ENCODE measurements at regions of chr6 and their contacts with region 1.

Region 1: DNA sequence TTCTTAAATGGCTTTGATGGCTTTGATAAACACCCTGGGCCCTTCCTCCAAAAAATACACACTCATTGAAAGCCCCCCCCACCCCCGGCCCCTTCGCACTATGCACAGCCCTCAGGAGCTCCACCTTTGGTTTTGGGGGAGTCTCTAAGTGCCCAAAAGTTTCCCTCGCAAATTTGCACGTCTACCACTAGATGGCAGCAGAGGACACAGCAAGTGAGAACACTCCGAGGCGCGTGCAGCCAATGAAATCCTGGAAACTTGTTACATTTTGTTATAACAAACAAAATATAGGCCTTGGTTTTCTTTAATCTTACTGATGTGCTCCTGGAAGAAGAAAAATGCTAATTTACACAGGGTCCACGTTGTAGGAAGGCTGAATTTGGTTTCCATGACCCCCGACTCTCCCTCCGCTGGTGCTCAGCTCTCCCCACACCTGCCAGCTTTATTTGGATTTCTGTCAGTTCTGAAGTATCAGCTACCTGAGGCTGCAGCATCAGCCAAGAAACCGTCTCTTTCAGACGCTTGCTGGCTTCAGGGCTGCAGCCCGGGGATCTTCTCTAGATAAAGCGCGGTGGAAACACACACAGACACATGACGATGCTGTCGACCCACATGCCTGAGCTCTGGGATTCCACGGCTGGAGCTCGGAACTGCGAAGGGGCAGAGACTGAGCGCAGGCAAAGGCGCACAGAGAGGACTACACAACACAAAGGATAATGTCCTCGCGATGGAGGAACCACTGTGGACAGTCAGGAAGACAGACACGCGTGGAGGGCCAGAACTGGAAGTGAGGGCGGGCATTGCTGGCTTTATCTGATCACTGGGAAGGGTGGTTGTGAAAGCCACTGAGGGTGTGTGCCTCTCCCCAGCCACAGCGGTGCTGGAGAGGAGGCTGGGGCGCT is 148.4 kb upstream of the RPS6KA2 start:
- DNase-seq: peak; percentile 41 to 76 (median 68)
- ATAC-seq: peak in 1 of 2 donors; percentile 65
- H3K4me3 ChIP-seq: no peak overlapping the region
- H3K27ac ChIP-seq: no peak overlapping the region
- H3K4me1 ChIP-seq: no peaks in the 10 kb centered on the region
- H3K27me3 ChIP-seq: no peaks in the 10 kb centered on the region

Region 2: DNA sequence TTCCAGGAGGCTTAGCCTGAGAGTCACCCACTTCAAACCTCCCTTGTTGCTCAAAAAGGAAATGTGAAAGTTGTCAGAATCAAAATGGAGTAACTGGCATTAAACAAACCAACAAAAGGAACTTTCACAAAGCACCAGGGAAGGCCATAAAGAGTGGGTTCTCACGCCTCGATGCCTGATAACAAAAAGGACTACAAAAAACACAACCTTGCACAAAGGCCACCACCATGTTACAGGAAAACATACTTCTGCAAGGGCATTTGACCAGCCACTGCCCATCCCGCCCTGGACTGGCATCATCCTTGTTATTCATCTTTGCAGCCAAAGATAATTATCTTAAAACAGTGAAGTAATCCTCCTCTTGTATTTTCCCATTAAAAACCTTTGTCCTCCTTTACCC is 146.1 kb after region 1 on chr6:
- intact Hi-C with region 1: no loop called
- DNase-seq: no peak
- ATAC-seq: no peak
- H3K4me3 ChIP-seq: no peak overlapping the region
- H3K27ac ChIP-seq: no peak overlapping the region
- H3K4me1 ChIP-seq: no peaks in the 10 kb centered on the region
- H3K27me3 ChIP-seq: no peaks in the 10 kb centered on the region

Region 3: DNA sequence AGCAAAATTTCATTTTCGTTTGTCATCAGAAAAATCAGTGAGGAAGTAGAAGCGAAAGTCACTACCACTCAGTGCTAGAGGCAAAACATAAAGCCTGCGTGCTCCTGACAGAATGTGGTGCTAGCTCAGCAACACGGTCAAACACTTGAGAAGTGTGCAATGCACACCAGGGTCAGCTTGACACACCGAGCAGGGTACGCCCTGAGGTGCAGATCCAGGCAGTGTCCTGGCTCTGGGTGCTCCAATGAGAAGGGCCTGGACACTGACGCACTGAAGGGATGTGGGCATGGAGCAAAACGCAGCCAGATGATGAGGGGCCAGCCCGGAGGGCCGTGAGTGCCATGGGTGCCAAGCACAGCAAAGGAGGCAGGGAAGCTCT is 175.0 kb after region 1 on chr6:
- intact Hi-C with region 1: loop called in 3 of 4 experiments (anchors 5 to 10 kb)
- DNase-seq: peak in 1 of 3 donors; percentile 46
- ATAC-seq: peak; percentile 44 to 45
- H3K4me3 ChIP-seq: no peak overlapping the region
- H3K27ac ChIP-seq: peak overlapping the region; percentile 16
- H3K4me1 ChIP-seq: peaks cover under 1% of the 10 kb centered on the region
- H3K27me3 ChIP-seq: no peaks in the 10 kb centered on the region

Region 4: GRCh38 chr6:166956444-166957086 is 181.1 kb after region 1 on chr6 and contains the start of gene RNASET2:
- intact Hi-C with region 1: loop called in 3 of 4 experiments (anchors 5 to 10 kb)
- DNase-seq: peak; percentile 97 to 99 (median 99)
- ATAC-seq: peak; percentile 99
- H3K4me3 ChIP-seq: peak within 1 kb of the TSS; percentile 73
- H3K27ac ChIP-seq: peak within 1 kb of the TSS; percentile 42
- H3K4me1 ChIP-seq: peaks cover 2% of the 10 kb centered on the region
- H3K27me3 ChIP-seq: no peaks in the 10 kb centered on the region
- total RNA-seq, gene RNASET2: 19.4 to 27.2 (median 22.9) TPM

Region 5: GRCh38 chr6:166989427-166990032 is 214.1 kb after region 1 on chr6:
- intact Hi-C with region 1: loop called in 2 of 4 experiments (anchors 10 kb)
- DNase-seq: no peak
- ATAC-seq: no peak
- H3K4me3 ChIP-seq: no peak overlapping the region
- H3K27ac ChIP-seq: no peak overlapping the region
- H3K4me1 ChIP-seq: no peaks in the 10 kb centered on the region
- H3K27me3 ChIP-seq: no peaks in the 10 kb centered on the region

Region 6: GRCh38 chr6:167141667-167142432 is 366.4 kb after region 1 on chr6:
- intact Hi-C with region 1: loop called in 2 of 4 experiments (anchors 5 to 10 kb)
- DNase-seq: peak in 2 of 3 donors; percentile 68
- ATAC-seq: peak; percentile 76 to 77
- H3K4me3 ChIP-seq: no peak overlapping the region
- H3K27ac ChIP-seq: no peak overlapping the region
- H3K4me1 ChIP-seq: no peaks in the 10 kb centered on the region
- H3K27me3 ChIP-seq: no peaks in the 10 kb centered on the region

Measured in right cardiac atrium (tissue), 5 donors.